ENCODE measurements at regions of chr12 and their contacts with region 1.

Region 1: GRCh38 chr12:98424726-98425401 is 90.5 kb upstream of the TMPO start:
- DNase-seq: peak; percentile 67
- H3K4me3 ChIP-seq: no peak overlapping the region
- CTCF ChIP-seq: peak; percentile 65

Region 2: GRCh38 chr12:98408681-98409080 is 16.2 kb before region 1 on chr12:
- CTCF ChIA-PET with region 1: no interaction called
- POLR2A ChIA-PET with region 1: no interaction called
- DNase-seq: no peak
- H3K4me3 ChIP-seq: no peak overlapping the region
- CTCF ChIP-seq: no peak

Region 3: DNA sequence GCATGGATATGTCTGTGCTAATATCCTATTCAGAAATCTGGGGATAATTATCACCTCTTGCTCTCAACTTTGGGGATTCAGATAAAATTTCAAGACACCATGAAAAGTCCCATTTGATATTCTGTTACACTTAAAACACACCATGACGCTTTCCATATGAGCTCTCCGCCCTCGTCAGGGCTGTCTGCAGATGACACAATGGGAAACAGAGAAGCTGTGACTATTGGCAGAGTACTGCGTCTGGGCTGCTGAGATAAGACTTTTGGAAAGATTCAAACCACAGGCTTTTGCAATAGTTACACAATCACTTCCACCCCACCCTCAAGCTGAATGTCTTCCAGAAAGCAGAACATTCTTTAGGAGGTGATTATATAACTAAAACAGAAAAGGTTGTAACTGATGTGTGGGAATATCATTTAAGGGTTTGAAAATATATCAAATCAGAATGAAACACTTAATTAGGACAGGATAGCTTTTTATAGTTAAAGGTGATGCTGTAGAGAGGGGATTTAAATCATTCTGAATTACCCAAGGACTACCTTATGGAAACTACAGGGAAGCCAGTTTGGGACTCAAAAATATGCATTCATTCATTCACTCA is 15.2 kb after region 1 on chr12:
- CTCF ChIA-PET with region 1: interaction called, 59 read pairs
- POLR2A ChIA-PET with region 1: interaction called, 5 read pairs
- DNase-seq: peak; percentile 91
- H3K4me3 ChIP-seq: no peak overlapping the region
- CTCF ChIP-seq: no peak

Region 4: DNA sequence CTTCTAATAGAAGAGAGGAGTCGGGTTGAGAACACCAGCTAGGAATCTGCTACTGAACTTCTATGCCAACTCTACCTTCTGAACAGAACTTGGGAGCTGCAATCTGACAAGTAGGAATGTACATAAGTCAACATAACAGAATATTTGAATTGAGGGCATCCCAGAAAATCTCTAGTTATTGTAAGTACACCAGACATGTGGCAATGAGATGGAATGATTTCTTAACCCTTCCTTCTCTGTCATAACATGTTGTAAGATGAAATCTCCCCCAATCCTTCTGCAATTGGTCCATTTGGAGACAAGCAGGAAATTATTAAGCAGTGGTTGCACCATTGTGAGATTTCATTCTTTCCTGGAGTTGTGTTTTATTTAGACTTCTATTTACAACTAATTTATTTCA is 21.8 kb after region 1 on chr12:
- CTCF ChIA-PET with region 1: interaction called, 59 read pairs
- POLR2A ChIA-PET with region 1: no interaction called
- DNase-seq: no peak
- H3K4me3 ChIP-seq: no peak overlapping the region
- CTCF ChIP-seq: no peak

Region 5: DNA sequence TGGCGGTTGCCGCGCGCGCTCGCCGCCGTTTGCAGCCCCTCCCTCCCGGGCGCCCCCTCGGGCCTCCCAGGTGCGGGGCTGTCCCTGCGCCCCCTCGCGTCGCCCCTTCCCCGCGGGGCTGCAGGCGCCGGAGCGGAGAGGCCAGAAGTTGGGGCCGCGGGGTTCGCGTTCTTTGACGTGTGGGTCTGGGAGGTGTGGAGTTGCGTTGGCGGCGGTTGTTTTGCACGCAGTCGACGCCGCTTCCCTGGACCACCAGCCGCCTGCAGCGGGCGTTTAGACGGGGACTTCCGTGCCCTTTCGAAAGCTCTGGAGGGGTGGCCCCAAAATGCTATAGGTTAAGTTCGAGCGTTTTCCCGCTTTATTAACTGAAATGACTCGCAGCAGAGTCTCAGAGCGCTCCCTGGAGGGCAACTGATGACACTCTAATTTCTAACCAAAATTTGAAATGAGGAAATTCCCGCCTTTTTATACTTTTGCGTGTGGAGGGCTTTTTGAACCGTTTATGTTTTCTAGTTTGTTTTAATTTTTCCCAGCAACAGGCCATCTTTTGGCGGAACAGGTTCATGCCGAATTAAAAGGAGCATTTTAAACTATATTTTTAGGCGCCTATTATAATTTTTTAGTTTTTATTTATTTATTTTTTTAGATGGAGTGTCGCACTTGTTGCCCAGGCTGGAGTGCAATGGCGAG is 91.5 kb after region 1 on chr12:
- CTCF ChIA-PET with region 1: interaction called, 105 read pairs
- POLR2A ChIA-PET with region 1: interaction called, 3 read pairs
- DNase-seq: peak; percentile 16
- H3K4me3 ChIP-seq: peak overlapping the region; percentile 95
- CTCF ChIP-seq: peak; percentile 51

Region 6: GRCh38 chr12:98532681-98533304 is 107.9 kb after region 1 on chr12:
- CTCF ChIA-PET with region 1: interaction called, 50 read pairs
- POLR2A ChIA-PET with region 1: no interaction called
- DNase-seq: no peak
- H3K4me3 ChIP-seq: no peak overlapping the region
- CTCF ChIP-seq: peak; percentile 29

Region 7: GRCh38 chr12:98653866-98654493 is 229.1 kb after region 1 on chr12:
- CTCF ChIA-PET with region 1: interaction called, 14 read pairs
- POLR2A ChIA-PET with region 1: no interaction called
- DNase-seq: no peak
- H3K4me3 ChIP-seq: no peak overlapping the region
- CTCF ChIP-seq: peak; percentile 42

Region 8: GRCh38 chr12:98788396-98788795 is 363.5 kb after region 1 on chr12:
- CTCF ChIA-PET with region 1: no interaction called
- POLR2A ChIA-PET with region 1: no interaction called
- DNase-seq: no peak
- H3K4me3 ChIP-seq: no peak overlapping the region
- CTCF ChIP-seq: no peak

Measured in AG04449 (cell line).